ENCODE measurements at regions of chr16 and their contacts with region 1.

Region 1: GRCh38 chr16:1579201-1579600 is 32.7 kb downstream of the IFT140 start:
- DNase-seq: no peak

Region 2: DNA sequence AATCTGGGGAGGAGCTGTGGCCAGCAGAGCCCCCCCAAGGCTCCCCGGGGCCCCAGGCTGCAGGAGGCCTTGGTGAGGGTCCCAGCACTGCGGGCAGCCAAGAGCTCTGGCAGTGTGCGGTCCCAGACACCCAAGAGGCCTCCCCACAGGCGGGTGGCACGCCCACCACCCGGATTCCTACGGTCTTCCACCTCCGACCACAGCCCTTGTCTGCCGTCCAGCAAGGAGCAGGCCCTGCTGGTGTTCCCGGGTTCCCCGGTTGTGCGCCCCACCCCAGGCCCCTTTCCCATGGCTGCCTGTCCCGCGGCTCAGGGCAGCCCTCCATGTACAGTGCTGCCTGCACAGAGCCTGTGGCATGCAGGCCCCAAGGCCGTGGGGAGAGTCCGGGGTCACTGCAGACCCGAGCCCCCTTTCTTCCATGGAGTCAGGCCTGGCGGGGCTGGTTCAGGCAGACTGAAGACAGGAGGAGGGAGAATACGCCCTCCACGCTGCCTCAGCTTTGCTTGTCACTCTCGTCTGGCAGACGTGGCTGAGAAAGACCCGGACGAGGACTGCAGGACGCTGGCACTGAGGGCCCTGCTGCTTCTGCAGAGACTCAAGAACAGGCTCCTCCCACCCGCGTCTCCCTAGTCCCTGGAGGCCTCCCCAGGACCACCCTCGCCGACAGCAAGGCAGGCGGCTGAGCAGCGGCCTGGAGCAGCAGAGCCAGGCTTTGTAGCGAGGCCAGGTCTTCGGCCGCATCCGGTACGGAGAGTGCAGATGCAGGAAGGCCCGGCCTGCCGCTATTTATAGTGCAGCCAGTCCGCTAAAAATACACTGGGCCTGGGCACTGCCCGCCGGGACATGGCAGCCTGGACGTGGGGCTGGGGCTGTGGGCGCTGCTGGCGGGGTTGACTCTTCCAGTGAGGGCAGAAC is 69.6 kb before region 1 on chr16:
- intact Hi-C with region 1: loop called (anchors 10 kb)
- DNase-seq: no peak

Measured in head of caudate nucleus (tissue), 42 donors.